Activated CD4-positive, alpha-beta T cell treated with anti-CD3 and anti-CD28 coated beads, Interleukin-2, amount 10 ng/mL, durations not matched to agents 24 days and 14 days (primary cell): ENCODE measurements at regions of chr3 and their contacts with region 1.

Region 1: GRCh38 chr3:183468424-183468823 is 40.0 kb upstream of the MCF2L2 start:
- DNase-seq: no peak
- H3K4me3 Mint-ChIP-seq: no peak overlapping the region
- H3K27ac Mint-ChIP-seq: peak overlapping the region; percentile 78
- H3K4me1 Mint-ChIP-seq: peaks cover 16% of the 10 kb centered on the region
- H3K27me3 Mint-ChIP-seq: peaks cover 4% of the 10 kb centered on the region

Region 2: DNA sequence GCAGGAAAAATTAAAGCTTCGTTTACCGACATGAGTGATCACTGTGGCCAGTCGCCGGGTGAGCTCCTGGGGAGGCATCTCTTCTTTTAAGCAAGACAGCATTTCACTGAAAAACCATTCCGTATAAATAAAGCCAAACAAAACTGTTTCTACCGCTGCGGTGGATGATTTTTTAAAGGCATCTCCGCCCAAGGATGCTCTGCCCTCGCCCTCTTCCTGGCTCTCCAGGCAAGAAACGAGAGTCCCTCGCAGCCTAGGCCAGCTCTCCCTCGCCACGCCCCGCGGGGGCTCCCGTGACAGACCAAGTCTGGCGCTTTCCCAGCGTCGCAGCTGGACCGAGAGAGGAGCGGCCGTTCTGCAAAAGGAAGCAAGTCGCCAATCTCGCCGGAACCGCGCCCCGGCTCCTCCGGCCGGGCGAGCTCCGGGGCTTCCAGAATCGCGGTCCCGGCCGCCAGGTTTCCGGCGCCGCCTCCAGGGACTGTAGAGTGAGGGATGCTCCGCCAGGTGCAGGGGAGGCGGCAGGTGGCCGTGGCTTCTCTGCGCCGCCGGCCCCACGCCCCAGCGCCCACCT is 40.5 kb before region 1 on chr3:
- intact Hi-C with region 1: loop called (anchors 1 kb)
- DNase-seq: peak; percentile 82
- H3K4me3 Mint-ChIP-seq: peak overlapping the region; percentile 82
- H3K27ac Mint-ChIP-seq: peak overlapping the region; percentile 57
- H3K4me1 Mint-ChIP-seq: peaks cover 35% of the 10 kb centered on the region
- H3K27me3 Mint-ChIP-seq: peaks cover 2% of the 10 kb centered on the region

Region 3: GRCh38 chr3:183481582-183481981 is 13.2 kb after region 1 on chr3:
- intact Hi-C with region 1: loop called (anchors 1 kb)
- DNase-seq: no peak
- H3K4me3 Mint-ChIP-seq: no peak overlapping the region
- H3K27ac Mint-ChIP-seq: no peak overlapping the region
- H3K4me1 Mint-ChIP-seq: peaks cover 5% of the 10 kb centered on the region
- H3K27me3 Mint-ChIP-seq: peaks cover under 1% of the 10 kb centered on the region

Region 4: GRCh38 chr3:183635431-183636220 is 167.2 kb after region 1 on chr3 and contains the start of gene KLHL24:
- intact Hi-C with region 1: loop called (anchors 2 kb)
- DNase-seq: peak; percentile 97
- H3K4me3 Mint-ChIP-seq: peak within 1 kb of the TSS; percentile 94
- H3K27ac Mint-ChIP-seq: peak within 1 kb of the TSS; percentile 96
- H3K4me1 Mint-ChIP-seq: peaks cover 20% of the 10 kb centered on the region
- H3K27me3 Mint-ChIP-seq: no peaks in the 10 kb centered on the region
- total RNA-seq, gene KLHL24: 6.7 and 6.9 TPM in 2 replicates

Region 5: GRCh38 chr3:183766745-183767606 is 298.6 kb after region 1 on chr3:
- intact Hi-C with region 1: loop called (anchors 1 kb)
- DNase-seq: peak; percentile 93
- H3K4me3 Mint-ChIP-seq: no peak overlapping the region
- H3K27ac Mint-ChIP-seq: peak overlapping the region; percentile 37
- H3K4me1 Mint-ChIP-seq: peaks cover 8% of the 10 kb centered on the region
- H3K27me3 Mint-ChIP-seq: no peaks in the 10 kb centered on the region